ENCODE measurements at regions of chr21 and their contacts with region 1.

Region 1: DNA sequence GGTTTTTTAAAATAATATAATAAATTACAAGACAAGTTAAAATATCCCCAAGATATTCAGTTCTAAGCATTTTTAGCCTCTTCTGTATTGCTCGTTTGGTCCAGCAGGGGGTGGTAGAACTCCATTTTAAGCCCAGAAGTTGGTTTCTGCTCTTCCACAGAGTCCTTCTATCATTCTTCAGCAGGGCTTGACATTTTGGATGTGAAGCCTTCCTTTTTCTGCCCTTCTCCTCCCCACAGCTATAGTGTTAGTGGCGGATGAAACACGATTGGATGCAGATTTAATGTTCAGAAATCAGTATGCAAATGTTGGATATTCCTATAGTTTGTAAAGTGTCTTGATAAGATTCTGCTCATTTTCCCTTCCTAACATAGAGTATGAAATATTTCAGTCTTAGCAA is 1.4 kb downstream of the NCAM2 start:
- DNase-seq: peak in 40 of 42 donors; percentile 4 to 88 (median 68)

Region 2: GRCh38 chr21:20811702-20812101 is 188.0 kb before region 1 on chr21:
- intact Hi-C with region 1: no loop called
- DNase-seq: peak in 4 of 42 donors; percentile 14 to 54 (median 21)

Region 3: DNA sequence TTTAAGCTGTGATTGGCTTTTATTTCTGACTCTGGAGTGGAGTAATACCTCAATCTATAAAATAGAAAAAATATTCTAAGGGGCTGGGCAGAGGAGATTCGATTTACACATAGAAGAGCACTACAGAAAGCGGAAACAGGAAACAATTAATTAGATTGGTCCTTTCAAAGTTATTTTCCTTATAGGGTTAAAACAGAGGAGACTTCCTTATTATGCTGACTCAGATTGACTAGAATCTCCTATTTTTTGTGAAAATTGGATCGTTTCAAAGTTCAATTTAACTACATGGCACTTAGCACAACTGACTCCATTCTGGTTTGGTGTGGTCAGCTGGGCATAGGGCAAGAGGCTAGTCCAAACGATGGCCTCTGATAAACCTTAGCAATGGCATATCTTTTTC is 49.8 kb before region 1 on chr21:
- intact Hi-C with region 1: no loop called
- DNase-seq: no peak

Region 4: GRCh38 chr21:21101911-21102310 is 102.3 kb after region 1 on chr21:
- intact Hi-C with region 1: loop called (anchors 2 kb)
- DNase-seq: peak in 29 of 42 donors; percentile 17 to 84 (median 58)

Region 5: GRCh38 chr21:21373969-21374368 is 374.3 kb after region 1 on chr21:
- intact Hi-C with region 1: loop called (anchors 10 kb)
- DNase-seq: no peak

Region 6: DNA sequence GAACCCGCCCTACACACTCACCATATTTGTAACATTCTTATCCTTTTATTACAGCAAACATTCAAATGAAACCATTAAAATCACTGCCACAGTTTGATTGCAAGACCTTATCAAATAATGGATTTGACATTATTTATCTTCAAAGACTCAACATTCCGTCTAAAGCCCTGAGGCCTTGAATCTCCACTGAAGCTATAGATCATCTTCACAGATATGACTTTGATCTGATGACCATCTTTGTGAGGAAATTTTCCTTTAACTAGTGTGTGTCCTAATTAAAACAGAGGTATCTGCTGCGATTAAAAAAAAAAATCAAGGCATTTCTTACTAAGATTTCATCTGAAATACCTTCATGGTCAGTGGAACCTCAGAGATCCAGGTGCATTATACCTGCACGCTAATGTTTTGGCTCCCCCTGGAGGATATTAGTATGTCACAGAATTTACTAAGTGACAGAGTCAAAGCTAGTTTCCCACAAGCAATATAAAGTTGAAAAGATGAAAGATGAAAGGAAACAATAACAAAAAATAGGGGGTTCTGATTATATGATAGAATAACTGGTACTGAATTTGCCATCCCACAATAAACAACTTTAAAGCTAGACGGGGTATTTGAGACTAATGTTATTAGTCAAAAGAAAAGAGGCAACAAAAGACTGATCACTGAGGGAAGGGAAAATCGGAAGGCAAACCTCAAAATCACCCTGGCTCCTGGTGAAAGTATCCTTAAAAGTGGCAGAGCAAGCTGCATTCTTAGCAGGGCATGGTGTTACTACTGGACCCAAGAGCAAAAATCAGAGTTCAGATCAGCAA is 922.0 kb after region 1 on chr21:
- intact Hi-C with region 1: loop called (anchors 10 kb)
- DNase-seq: peak in 8 of 42 donors; percentile 7 to 47 (median 20)